PC-9 (cell line): ENCODE measurements at regions of chr4 and their contacts with region 1.

Region 1: GRCh38 chr4:17636696-17637622 is 22.5 kb downstream of the MED28 start:
- DNase-seq: peak; percentile 39 to 69
- H3K4me3 ChIP-seq: no peak overlapping the region
- H3K27ac ChIP-seq: no peak overlapping the region
- H3K4me1 ChIP-seq: no peaks in the 10 kb centered on the region
- H3K27me3 ChIP-seq: no peaks in the 10 kb centered on the region
- CTCF ChIP-seq: peak; percentile 80

Region 2: DNA sequence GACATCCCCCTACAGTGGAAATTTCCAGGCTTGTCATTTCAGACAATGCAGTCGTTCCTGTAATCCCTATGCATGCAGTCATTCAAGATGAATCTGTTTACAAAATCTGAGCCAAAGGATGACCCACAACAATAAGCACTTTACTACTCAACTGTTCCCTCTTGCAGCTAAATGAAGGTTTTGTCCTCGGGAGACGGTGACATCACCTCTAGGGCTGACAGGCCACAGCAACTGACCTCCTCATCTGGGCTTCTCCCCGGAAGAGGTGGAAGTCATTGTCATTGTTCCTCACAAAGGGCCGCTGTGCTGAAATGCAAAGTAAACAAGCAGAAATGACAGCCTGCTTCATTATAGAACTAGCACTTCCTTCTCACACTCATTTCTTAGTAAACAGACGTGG is 92.8 kb before region 1 on chr4:
- CTCF ChIA-PET with region 1: no interaction called
- POLR2A ChIA-PET with region 1: no interaction called
- intact Hi-C with region 1: loop called (anchors 1 kb)
- DNase-seq: peak in 1 of 2 experiments; percentile 46
- H3K4me3 ChIP-seq: no peak overlapping the region
- H3K27ac ChIP-seq: no peak overlapping the region
- H3K4me1 ChIP-seq: 0 out of 2 replicates have a peak, but pooled peaks cover 3% of the 10 kb centered on the region
- H3K27me3 ChIP-seq: no peaks in the 10 kb centered on the region
- CTCF ChIP-seq: no peak